OCI-LY7 (cell line): ENCODE measurements at regions of chr15 and their contacts with region 1.

Region 1: GRCh38 chr15:55434989-55435825 is 26.9 kb downstream of the PIERCE2 start:
- DNase-seq: peak; percentile 63
- H3K4me3 ChIP-seq: no peak overlapping the region
- H3K27ac ChIP-seq: no peak overlapping the region
- H3K4me1 ChIP-seq: no peaks in the 10 kb centered on the region
- CTCF ChIP-seq: peak; percentile 85

Region 2: DNA sequence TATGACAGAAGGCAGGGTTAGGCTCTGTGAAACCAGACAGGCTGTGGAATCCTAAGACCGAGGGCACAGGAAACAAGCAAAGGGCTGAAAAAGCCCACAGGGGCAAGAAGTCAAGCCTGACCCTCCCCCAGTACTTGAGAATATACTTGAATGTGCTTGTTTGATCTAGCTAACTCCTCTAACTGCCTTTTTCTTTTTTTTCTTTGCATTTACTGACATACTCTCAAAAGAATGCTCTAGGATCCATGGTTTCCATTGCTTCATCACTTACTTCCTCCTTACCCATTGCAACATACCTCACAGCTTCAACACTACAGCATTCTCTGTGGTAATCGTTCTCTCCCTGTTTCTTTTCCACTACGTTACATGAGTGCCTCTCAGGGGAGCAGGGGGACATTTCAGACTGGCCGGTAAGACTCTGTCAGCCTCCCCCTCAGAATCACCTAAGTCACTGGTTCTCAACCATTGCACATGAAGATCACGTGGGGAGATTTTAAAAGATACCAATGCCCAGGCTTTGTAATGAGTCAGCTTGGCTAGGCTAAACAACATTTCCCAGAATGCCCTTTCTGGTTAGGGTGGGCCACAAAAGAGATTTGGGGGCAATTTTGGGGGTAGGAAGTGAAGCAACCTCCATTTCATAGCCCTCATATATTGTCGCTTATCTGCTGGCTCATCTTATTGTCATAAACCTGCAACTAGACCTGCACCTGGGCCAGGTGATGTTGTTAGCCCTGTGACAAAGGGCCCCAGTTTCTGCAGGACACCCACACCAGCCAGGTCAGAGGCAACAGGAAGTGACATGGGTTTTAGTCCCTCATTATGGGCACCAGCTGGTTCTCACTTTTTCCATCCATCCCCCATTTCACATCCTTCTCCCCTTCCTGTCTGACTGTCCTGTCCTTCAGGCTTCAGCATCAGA is 213.9 kb before region 1 on chr15:
- CTCF ChIA-PET with region 1: interaction called, 6 read pairs
- POLR2A ChIA-PET with region 1: interaction called, 5 read pairs
- intact Hi-C with region 1: loop called (anchors 1 kb)
- DNase-seq: peak; percentile 51
- H3K4me3 ChIP-seq: no peak overlapping the region
- H3K27ac ChIP-seq: peak overlapping the region; percentile 17
- H3K4me1 ChIP-seq: peaks cover 34% of the 10 kb centered on the region
- CTCF ChIP-seq: no peak

Region 3: GRCh38 chr15:55297315-55297714 is 137.9 kb before region 1 on chr15:
- CTCF ChIA-PET with region 1: no interaction called
- POLR2A ChIA-PET with region 1: interaction called, 10 read pairs
- intact Hi-C with region 1: no loop called
- DNase-seq: no peak
- H3K4me3 ChIP-seq: no peak overlapping the region
- H3K27ac ChIP-seq: no peak overlapping the region
- H3K4me1 ChIP-seq: no peaks in the 10 kb centered on the region
- CTCF ChIP-seq: no peak

Region 4: DNA sequence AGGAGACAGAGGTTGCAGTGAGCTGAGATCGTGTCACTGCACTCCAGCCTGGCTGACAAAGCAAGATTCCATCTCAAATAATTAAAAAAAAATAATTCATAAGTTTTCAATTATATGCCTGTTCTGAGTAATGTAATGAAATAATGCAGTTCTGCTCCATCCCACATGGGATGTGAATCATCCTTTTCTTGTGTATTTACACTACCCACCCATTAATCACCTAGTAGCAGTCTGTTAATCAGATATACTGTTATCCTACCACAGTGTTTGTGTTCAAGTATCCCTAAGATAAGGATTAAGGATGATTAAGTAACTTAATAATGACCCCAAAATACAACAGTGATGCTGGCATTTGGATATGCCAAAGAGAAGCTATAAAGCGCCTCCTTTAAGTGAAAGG is 77.4 kb before region 1 on chr15:
- CTCF ChIA-PET with region 1: no interaction called
- POLR2A ChIA-PET with region 1: no interaction called
- intact Hi-C with region 1: loop called (anchors 5 kb)
- DNase-seq: no peak
- H3K4me3 ChIP-seq: no peak overlapping the region
- H3K27ac ChIP-seq: no peak overlapping the region
- H3K4me1 ChIP-seq: no peaks in the 10 kb centered on the region
- CTCF ChIP-seq: no peak

Region 5: DNA sequence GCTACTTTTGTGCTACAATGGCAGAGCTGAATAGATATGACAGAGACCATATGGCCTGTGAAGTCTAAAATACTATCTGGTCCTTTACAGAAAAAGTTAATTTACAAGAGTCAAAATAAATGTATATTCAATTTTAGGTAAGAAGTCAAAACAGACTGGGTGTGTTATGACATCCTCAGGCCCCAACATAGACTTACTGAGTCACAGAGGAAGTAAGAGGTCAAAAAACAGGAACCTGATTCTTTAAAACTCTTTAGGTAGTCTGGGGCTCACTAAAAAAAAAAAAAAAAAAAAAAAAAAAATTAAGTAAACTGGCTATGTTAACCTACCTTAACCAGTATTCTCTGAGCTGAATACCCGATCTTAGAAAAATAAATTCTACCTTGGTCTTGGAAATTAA is 59.7 kb after region 1 on chr15:
- CTCF ChIA-PET with region 1: no interaction called
- POLR2A ChIA-PET with region 1: no interaction called
- intact Hi-C with region 1: no loop called
- DNase-seq: peak; percentile 24
- H3K4me3 ChIP-seq: no peak overlapping the region
- H3K27ac ChIP-seq: no peak overlapping the region
- H3K4me1 ChIP-seq: peaks cover 4% of the 10 kb centered on the region
- CTCF ChIP-seq: no peak

Region 6: DNA sequence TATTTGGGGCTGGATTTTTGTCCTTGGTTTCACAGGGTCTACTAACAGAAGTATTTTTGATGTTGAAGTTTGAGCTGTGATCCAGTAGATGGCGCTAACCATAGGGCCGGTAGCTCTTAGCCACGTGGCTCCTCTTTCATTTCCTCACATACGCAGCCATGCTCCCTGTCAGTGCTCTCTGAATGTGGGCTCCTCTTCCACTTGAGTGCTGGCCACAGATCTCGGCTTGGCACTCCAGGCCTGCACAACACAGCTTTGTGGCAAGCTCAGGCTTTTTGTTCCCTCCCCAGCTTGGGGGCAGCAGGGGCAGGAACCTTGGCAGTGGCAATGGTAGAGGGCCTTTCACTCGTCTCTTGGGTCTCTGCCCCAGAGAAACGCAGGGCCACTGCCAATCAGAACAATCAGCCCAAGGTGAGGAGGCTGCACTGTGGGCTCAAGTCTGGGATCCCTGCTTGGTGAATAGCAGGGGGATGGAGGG is 91.4 kb after region 1 on chr15:
- CTCF ChIA-PET with region 1: no interaction called
- POLR2A ChIA-PET with region 1: no interaction called
- intact Hi-C with region 1: no loop called
- DNase-seq: peak; percentile 75
- H3K4me3 ChIP-seq: no peak overlapping the region
- H3K27ac ChIP-seq: no peak overlapping the region
- H3K4me1 ChIP-seq: peaks cover 29% of the 10 kb centered on the region
- CTCF ChIP-seq: peak; percentile 86